BJ (cell line): ENCODE measurements at regions of chr17 and their contacts with region 1.

Region 1: GRCh38 chr17:80426681-80427326 is 11.8 kb downstream of the ENDOV start:
- DNase-seq: no peak
- H3K4me3 ChIP-seq: no peak overlapping the region
- H3K27me3 ChIP-seq: no peaks in the 10 kb centered on the region
- CTCF ChIP-seq: peak; percentile 96

Region 2: GRCh38 chr17:80414803-80415625 is 11.8 kb before region 1 on chr17 and contains the start of gene ENDOV:
- CTCF ChIA-PET with region 1: interaction called, 11 read pairs
- POLR2A ChIA-PET with region 1: no interaction called
- DNase-seq: peak; percentile 29
- H3K4me3 ChIP-seq: peak within 1 kb of the TSS; percentile 89
- H3K27me3 ChIP-seq: no peaks in the 10 kb centered on the region
- CTCF ChIP-seq: no peak
- polyA plus RNA-seq, gene ENDOV: 19.5 and 29.8 TPM in 2 replicates

Region 3: DNA sequence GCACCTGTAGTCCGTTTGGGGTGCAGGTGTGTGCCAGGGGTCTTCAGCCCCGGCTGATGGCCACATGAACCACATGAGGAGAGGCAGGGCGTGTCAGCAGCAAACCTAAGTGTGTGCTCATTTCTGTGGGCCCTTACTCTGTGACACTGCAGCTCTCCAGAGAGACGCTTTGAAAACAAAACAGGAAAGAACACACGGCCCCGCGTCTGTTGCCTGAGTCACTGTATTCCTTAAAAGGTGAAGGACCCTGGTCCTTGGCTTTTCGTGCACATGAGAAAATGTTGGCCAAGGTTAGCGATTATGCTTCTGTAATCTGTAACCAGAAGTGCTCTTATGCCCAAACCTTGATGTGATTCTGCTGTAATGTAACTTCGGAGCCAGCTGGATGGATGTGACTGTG is 10.7 kb after region 1 on chr17:
- CTCF ChIA-PET with region 1: interaction called, 22 read pairs
- POLR2A ChIA-PET with region 1: no interaction called
- DNase-seq: no peak
- H3K4me3 ChIP-seq: no peak overlapping the region
- H3K27me3 ChIP-seq: no peaks in the 10 kb centered on the region
- CTCF ChIP-seq: no peak

Region 4: DNA sequence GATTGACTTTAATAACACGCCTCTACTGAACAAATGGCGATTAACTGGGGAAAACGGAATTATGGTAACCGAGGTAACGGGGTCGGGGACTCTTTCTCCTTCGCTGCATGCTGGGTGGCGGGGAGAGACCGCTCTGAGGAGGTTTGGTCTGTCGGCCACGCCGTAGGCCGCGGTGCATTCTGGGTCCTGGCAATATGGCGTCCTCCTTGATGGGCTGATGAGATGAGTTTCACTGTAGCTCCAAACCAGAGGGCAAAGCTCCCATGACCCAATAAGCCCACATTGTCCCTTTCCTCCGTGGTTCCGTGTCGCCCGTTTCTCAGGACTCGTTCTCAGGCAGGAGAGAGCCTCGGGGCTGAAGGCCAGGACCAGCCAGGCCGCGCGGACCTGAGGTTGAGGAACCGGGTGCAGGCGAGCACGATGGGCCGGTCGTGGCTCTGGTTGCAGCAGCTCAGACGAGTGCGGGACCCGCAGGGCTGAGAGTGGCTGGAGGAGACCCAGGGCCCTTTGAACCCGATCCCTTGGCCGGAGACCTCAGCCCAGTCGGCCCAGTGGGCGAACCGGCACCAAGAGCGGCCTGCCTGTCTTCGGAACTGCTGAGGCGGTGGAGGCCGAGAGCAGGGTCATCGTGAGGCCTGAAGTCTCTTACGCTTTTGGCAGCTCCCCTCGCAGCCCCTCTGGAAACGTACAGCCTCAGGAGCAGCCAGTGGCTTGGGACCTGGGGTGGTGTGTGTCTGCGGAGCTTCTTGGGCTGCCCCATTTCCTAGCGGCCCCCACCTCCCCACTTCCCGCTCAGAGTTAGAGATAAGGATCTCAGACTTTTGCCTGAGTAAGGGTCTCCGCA is 118.1 kb after region 1 on chr17 and contains the start of gene RPTOR:
- CTCF ChIA-PET with region 1: no interaction called
- POLR2A ChIA-PET with region 1: no interaction called
- DNase-seq: peak; percentile 45
- H3K4me3 ChIP-seq: peak within 1 kb of the TSS; percentile 98
- H3K27me3 ChIP-seq: no peaks in the 10 kb centered on the region; the same call in 1 of the 2 replicates
- CTCF ChIP-seq: no peak
- polyA plus RNA-seq, gene RPTOR: 5.5 and 10.8 TPM in 2 replicates

Region 5: GRCh38 chr17:80555266-80555665 is 128.5 kb after region 1 on chr17:
- CTCF ChIA-PET with region 1: no interaction called
- POLR2A ChIA-PET with region 1: no interaction called
- DNase-seq: no peak
- H3K4me3 ChIP-seq: no peak overlapping the region
- H3K27me3 ChIP-seq: no peaks in the 10 kb centered on the region
- CTCF ChIP-seq: no peak

Region 6: DNA sequence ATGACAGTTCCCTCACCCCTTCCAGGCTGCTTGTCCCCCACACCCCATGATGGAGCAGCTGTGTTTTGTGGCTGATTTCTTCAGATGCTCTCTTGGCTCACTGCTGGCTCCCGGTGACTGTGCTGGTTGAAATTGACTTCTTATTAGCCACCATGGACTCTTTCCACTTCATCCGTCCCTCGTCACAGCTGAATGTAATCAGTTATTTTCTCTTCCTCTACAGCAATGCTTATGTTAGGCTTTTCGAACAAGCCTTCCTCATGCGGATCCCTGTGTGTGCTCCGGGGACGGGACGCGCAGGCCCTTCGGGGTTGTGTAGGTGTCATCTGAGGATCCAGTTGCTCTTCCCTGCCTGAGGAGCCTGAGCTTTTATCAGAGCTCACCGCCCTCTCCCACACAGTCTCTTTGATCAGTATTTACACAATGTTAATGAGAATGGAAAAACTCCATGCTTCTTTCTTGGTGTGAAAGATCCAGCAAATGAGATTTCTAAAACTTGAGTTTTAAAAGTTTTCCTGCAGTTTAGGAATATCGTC is 205.3 kb after region 1 on chr17:
- CTCF ChIA-PET with region 1: no interaction called
- POLR2A ChIA-PET with region 1: no interaction called
- DNase-seq: no peak
- H3K4me3 ChIP-seq: no peak overlapping the region
- H3K27me3 ChIP-seq: no peaks in the 10 kb centered on the region
- CTCF ChIP-seq: no peak

Region 7: DNA sequence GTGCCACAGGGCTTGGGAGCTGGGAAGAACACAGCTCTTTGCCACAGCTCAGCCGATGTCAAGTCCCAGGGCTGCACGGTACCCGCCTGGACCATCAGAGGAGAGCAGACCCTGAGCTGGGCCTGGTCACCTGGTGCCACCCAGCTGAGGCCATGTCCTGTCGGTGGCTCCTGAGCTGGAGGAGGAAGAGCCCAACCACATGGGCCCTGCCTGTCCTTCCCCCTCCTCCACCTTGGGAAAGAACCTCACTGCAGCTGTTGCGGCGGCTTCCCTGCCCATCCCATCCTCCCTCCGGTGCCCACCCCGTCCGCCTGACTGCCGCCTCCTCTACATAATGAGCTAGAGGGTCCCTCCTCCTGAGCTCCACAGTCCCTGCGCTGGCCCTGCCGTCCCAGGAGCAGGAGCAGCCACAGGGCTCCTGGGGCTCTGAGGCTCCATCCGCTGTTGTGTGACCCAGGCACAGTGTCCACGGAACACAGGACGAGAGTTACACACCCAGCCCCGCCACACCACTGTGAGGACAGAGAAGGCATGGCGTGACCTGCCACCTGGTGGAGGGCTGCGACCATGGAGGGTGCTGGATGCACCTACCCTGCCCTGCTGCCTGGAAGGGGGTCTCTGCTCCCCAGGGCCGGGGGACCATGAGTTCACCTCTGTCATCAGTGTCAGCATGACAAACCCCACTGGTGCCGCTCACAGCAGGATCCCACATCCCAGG is 543.4 kb after region 1 on chr17:
- CTCF ChIA-PET with region 1: interaction called, 22 read pairs
- POLR2A ChIA-PET with region 1: no interaction called
- DNase-seq: no peak
- H3K4me3 ChIP-seq: no peak overlapping the region
- H3K27me3 ChIP-seq: peaks cover 3% of the 10 kb centered on the region; the same call in 1 of the 2 replicates
- CTCF ChIP-seq: peak; percentile 62

Region 8: DNA sequence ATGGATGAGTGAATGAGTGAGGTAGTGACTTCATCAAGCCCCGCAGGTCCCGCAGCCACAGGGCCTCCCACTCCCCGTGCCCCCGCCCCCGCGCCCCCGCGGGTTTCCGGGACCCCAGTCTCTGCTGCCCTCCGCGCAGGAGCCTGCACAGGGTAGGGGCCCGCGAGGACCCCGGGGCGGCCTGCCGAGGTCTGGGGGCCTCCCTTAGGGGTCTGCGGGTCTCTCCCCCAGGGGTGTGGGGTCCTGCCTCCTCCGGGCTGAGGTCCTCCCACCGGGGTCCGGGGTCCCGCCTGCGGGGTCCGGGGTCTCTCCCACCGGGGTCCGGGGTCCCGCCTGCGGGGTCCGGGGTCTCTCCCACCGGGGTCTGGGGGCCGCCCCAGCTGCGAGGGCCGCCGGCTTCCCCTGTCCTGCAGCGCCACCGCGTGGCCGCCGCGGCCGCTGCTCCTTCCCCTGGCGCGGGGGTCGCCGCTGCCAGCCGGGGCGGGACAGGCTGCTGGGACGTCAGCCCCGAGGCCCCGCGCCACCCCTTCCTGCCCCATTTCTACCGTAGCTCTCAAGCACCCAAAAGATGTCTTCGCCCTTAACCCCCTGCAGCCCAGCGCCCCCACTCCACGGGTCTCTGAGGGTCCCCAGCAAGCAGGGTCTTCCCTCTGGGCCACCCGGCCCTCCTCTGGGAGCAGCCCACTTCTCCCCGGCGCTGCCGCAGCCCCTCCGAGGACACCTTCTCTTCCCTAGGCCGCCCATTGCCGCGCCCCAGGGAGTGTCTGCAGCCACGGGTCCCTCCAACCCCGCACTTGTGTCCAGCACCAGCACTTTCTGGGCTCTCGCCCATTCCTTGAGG is 554.5 kb after region 1 on chr17:
- CTCF ChIA-PET with region 1: interaction called, 79 read pairs
- POLR2A ChIA-PET with region 1: no interaction called
- DNase-seq: no peak
- H3K4me3 ChIP-seq: peak overlapping the region; percentile 20
- H3K27me3 ChIP-seq: no peaks in the 10 kb centered on the region
- CTCF ChIP-seq: peak; percentile 34

Region 9: DNA sequence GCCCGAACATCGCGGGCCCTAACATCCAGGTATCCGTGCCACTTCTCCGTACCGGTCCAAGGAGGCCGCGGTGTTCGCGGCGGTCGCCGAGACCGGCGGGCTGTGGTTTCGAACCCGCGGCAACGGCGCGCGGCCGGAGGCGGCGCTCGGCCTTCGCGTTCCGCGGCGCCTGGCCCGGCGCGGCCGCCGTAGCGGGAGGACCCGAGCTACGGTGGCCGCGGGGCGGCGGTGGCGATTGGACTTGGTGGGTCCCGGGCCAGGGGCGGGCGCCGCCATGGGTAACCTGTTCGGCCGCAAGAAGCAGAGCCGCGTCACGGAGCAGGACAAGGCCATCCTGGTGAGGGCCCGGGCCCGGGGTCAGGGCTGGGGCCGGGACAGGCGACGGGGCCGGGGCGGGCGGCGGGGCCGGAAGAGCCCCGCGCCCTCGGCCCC is 564.9 kb after region 1 on chr17 and contains the start of gene CHMP6:
- CTCF ChIA-PET with region 1: interaction called, 11 read pairs
- POLR2A ChIA-PET with region 1: no interaction called
- DNase-seq: no peak
- H3K4me3 ChIP-seq: peak within 1 kb of the TSS; percentile 82
- H3K27me3 ChIP-seq: no peaks in the 10 kb centered on the region
- CTCF ChIP-seq: no peak
- polyA plus RNA-seq, gene CHMP6: 27.3 and 30.7 TPM in 2 replicates